Activated CD8-positive, alpha-beta T cell treated with anti-CD3 and anti-CD28 coated beads, Interleukin-2, amount 10 ng/mL, durations not matched to agents 7 days and 5 days (primary cell): ENCODE measurements at regions of chr2 and their contacts with region 1.

Region 1: DNA sequence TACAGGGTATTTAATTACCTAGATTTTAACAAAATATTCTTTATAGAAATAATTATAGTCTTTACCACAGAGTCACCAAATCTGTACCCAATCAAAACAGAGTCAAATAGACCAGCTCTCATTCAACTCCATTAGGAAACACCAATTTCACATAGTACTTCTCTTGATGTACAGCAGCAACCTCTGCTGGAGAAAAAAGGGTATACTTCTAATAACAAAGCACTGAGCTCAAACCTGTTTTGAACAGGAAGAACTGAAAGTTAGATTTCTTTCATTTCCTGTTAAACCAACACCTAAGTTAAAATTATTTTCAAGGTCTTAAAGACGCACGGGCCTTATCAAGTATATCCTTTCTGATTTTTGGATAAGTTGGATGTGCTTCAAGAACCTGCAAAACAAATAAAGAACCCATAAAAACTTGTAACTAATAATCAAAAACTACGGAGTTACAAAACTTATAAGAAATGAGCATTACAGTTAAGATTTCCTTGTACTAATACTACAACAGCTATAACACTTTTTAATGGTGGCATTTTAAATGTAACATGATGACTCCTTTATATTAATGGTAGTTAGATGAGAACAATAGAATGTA is 79.0 kb downstream of the TTC21B start:
- DNase-seq: peak; percentile 35
- ATAC-seq: peak; percentile 92
- H3K4me3 Mint-ChIP-seq: no peak overlapping the region
- H3K27ac Mint-ChIP-seq: no peak overlapping the region
- H3K4me1 Mint-ChIP-seq: peaks cover 21% of the 10 kb centered on the region
- H3K27me3 Mint-ChIP-seq: no peaks in the 10 kb centered on the region

Region 2: DNA sequence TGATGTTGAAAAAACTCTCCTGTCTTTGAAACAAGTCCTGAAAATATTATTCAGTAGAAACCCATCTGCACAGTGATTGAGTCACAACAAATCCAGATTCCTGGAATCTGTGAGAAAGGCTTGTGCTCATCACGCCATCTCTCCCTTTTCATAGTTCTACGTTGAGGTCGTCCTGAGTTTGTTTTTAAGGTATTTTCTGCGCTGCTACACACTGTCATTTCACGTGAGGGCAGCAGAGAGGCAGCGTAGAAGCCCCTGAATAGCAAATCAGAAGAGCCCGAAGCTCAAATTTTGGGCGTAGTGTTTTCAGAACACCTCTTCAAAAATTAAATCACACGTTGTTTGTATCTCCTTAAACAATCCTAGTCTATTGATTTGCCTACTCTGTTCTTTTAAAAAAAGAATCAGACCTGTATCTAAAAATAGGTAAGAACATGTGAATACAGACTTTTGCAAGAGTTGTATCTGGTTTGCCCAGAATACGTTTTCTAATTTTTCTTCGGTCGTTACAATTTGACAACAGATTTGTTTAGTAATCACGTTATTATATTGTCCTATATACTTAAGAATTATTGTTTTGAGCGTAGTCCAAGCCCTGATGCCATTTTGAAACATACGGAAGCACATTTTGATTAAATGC is 857.6 kb before region 1 on chr2:
- CTCF ChIA-PET with region 1: interaction called, 12 read pairs
- POLR2A ChIA-PET with region 1: no interaction called
- DNase-seq: peak; percentile 37
- ATAC-seq: peak; percentile 71
- H3K4me3 Mint-ChIP-seq: no peak overlapping the region
- H3K27ac Mint-ChIP-seq: no peak overlapping the region
- H3K4me1 Mint-ChIP-seq: no peaks in the 10 kb centered on the region
- H3K27me3 Mint-ChIP-seq: no peaks in the 10 kb centered on the region

Region 3: DNA sequence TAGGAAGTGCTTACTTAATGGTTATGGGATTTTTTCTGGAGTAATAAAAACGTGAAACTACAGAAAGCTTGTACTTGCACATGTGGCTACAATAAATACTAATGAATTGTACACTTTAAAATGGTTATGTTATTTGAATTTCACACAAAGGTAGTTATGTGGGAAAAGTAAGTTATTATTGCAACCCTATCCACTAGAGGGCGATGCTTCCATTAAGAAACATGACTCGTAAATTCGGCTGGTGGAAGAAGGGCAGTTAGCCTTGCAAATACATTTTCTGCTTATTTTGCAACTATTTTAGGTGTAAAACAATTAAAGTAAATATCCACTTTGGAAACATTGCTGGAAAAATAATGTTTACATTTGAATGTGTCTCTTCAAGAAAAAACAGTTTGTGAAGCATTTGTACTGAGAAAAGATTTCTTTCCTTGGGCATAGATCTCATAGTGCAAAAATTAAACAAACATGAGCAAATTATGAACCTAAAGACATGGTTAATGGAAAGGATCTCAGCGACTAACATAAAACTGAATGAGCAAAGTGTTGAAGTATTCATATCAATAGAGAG is 473.2 kb before region 1 on chr2:
- CTCF ChIA-PET with region 1: interaction called, 57 read pairs
- POLR2A ChIA-PET with region 1: no interaction called
- DNase-seq: peak; percentile 40
- ATAC-seq: no peak
- H3K4me3 Mint-ChIP-seq: no peak overlapping the region
- H3K27ac Mint-ChIP-seq: no peak overlapping the region
- H3K4me1 Mint-ChIP-seq: no peaks in the 10 kb centered on the region
- H3K27me3 Mint-ChIP-seq: peaks cover 26% of the 10 kb centered on the region

Region 4: GRCh38 chr2:165794536-165794928 is 80.0 kb before region 1 on chr2:
- CTCF ChIA-PET with region 1: interaction called, 20 read pairs
- POLR2A ChIA-PET with region 1: no interaction called
- DNase-seq: peak; percentile 84
- ATAC-seq: peak; percentile 91
- H3K4me3 Mint-ChIP-seq: peak overlapping the region; percentile 88
- H3K27ac Mint-ChIP-seq: peak overlapping the region; percentile 95
- H3K4me1 Mint-ChIP-seq: peaks cover 43% of the 10 kb centered on the region
- H3K27me3 Mint-ChIP-seq: peaks cover 19% of the 10 kb centered on the region

Region 5: DNA sequence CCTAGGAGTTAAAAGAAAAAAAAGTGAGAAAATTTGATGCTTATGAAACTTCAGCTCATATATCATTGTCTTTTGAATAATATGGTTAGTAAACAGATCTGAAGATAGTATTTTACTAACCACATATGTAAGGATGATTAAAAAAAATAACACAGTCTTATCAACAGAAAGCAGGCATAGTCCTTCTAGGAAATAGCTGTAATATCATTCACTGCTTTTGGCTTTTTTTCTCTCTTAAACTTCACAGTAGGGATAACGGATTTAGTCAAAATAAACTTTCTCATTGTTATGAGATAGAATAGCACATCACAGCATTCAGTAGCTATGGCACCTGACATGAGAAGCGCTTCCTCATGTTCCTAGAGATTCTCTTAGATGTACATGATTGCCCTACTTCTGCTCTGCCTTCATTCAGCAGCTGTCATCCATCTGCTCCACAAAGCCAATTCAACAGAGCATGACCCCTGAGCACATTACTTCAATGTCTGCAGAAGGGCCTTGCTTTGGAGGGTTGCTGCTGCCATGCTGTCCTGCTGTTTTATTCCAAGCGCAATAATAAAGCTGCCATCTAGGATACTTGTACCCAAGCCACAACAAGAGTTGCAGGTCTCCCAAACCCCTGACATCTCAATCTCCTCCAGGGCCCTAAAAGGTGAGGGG is 12.1 kb after region 1 on chr2:
- CTCF ChIA-PET with region 1: interaction called, 10 read pairs
- POLR2A ChIA-PET with region 1: no interaction called
- DNase-seq: no peak
- ATAC-seq: no peak
- H3K4me3 Mint-ChIP-seq: no peak overlapping the region
- H3K27ac Mint-ChIP-seq: no peak overlapping the region
- H3K4me1 Mint-ChIP-seq: no peaks in the 10 kb centered on the region
- H3K27me3 Mint-ChIP-seq: no peaks in the 10 kb centered on the region